Activated T-helper 1 cell treated with anti-CD3 and anti-CD28 coated beads, Interleukin-12 subunit alpha, Interleukin-12 subunit beta, Interleukin-2, Interleukin-4 antibody, amounts not matched to agents 30 ng/mL and 10 ng/mL and 1 ng/mL, durations not matched to agents 14 hours and 24 hours and 36 hours (primary cell): ENCODE measurements at regions of chr21 and their contacts with region 1.

Region 1: DNA sequence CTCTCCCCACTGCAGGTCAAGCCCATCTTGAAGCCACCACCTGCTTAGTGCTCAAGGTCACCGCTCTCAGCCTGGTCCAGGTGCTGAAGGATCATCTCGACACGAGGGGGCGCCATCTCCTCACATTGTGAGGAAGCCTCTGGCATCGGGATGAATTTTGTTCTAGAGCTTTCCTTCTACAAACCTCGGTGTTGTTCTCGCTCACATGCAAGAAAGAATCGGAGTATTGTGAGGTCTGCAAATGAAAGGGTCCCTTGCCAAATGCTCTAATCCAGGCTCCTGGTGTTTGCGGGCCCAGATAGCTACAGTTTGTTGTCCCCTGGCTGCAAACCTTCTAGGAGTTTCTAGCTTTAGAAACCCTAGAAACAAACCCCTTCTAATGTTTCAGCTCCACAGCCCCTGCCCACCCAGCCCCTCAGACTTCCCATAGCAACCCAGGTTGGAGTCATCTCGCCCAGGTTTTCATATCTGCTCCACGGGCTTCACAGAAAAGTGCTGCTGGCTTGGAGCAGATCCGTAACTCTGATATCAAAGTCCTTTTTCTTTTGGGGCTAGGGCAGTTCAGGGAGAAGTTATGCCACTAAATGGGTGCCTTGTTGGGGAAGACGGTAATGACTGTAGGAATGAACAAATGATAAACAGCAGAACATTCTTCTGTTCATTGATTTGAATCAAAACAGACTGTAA is 8.6 kb upstream of the ATP5PO start:
- DNase-seq: peak; percentile 79
- H3K4me3 Mint-ChIP-seq: no peak overlapping the region
- H3K27ac Mint-ChIP-seq: no peak overlapping the region
- H3K4me1 Mint-ChIP-seq: peaks cover 27% of the 10 kb centered on the region
- H3K27me3 Mint-ChIP-seq: peaks cover 3% of the 10 kb centered on the region

Region 2: DNA sequence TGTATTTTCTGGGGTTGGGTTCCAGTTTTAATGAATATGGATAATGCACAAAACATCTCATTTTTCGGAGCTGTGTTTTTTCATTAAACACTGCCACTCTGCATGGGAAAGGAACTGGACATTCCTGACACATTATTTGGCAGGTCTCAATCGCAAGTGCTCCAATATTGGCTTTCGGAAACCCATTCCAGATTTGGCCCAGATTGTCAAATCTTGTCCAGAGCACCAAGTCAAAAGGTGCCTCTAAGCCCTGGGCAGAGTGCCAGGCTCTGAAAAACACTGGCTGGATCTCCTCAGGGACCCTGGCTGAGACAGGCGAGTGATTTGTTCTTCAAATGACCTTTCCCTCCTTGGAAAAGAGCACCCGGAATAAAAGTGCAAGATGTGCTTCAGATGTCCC is 80.8 kb after region 1 on chr21:
- intact Hi-C with region 1: no loop called
- DNase-seq: no peak
- H3K4me3 Mint-ChIP-seq: no peak overlapping the region
- H3K27ac Mint-ChIP-seq: no peak overlapping the region
- H3K4me1 Mint-ChIP-seq: peaks cover 28% of the 10 kb centered on the region
- H3K27me3 Mint-ChIP-seq: no peaks in the 10 kb centered on the region

Region 3: DNA sequence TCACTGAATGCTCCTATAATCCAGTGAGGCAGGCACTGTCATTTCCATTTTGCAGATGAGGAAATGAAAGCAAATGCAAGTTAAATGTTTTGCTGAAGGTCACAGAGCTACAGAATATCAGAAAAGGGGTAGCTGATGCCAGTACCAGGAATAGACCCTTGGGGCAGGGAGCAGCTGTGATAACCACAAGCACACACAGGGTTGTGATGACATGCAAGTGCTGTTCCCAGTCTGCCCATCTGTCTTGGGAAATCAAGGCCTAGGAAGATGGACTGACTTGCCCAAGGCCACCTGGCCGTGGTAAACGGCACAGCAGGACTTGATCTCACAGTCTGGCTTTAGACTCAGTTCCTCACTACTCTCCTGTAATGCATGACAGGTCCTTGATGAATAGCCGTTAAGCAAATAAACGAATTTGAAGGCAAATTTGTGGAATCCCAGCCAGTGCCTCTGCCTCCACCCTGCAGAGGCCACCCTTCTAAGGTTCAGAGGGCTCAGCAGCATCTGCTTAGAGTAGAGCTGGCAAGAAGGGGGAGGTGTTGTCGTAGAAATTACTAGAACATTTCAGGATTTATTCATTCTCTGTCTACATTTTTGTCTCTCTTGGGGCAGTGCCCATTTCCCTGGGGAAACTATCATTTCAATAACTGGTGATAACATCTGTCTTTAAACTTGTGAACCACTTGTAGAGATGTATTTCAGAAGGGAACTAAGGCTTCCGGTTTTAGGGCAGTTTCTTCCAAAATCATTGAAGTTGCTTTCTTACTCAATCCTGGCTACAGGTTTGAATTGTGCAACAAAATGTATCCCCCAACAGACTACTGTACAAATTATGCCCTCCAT is 96.0 kb after region 1 on chr21:
- intact Hi-C with region 1: loop called (anchors 2 kb)
- DNase-seq: no peak
- H3K4me3 Mint-ChIP-seq: peak overlapping the region; percentile 38
- H3K27ac Mint-ChIP-seq: peak overlapping the region; percentile 59
- H3K4me1 Mint-ChIP-seq: peaks cover 26% of the 10 kb centered on the region
- H3K27me3 Mint-ChIP-seq: no peaks in the 10 kb centered on the region

Region 4: DNA sequence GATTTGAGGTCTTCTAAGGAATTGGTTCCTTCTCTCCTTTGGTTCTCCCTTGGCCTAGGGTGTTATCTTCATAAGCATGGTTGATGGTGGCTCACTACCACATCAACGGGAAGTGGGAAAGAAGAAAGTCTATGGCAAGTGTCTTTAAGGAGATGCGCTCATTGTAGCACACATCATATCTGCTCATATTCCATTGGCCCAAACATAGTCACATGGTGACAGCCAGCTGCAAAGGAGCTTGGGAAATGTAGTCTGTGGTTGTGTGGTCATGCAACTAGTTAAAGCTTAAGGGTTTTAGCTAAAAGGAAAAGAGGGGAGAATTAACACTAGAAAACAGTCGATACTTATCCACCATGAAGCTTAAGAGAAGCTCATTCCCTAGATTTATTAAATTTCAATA is 137.8 kb after region 1 on chr21:
- intact Hi-C with region 1: no loop called
- DNase-seq: no peak
- H3K4me3 Mint-ChIP-seq: no peak overlapping the region
- H3K27ac Mint-ChIP-seq: no peak overlapping the region
- H3K4me1 Mint-ChIP-seq: no peaks in the 10 kb centered on the region
- H3K27me3 Mint-ChIP-seq: peaks cover 5% of the 10 kb centered on the region

Region 5: DNA sequence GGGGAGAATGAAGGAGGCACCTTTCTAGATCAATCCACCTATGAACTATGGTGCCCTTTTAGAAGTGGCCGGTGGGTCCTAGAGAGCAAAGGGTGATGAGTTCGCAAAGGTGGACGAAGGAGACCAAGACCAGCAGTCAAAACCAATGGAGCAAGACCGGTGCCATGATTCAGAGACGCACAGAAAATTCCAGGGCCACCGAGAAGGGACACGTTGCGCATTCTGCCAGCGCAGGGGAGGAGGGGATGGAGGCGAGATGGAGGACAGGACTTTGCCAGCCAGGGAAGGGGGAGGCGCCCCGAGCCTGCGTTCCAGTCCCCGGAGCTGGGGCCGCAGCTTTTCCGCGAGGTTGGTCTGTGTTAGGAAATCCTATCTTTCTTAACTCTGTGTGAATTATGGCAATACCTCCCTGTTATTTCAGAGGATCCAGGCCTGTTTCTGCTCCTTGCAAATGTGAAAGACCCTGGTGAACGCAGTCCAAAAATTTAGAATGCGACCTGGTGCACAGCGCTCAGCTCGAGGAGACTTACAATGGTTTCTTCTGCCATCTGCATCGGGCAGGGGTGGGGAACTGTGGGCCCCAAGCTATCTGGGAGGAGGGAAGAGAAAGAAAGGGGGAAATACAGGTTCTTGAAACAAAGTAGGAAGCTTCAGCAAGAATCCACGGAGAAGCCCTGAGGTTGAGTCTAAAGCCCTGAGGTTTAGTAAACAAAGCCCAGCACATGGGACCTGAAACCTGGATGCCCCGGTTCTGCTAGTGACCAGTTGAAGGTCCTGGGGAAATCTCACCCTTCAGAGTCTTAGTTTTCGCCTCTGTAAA is 278.5 kb after region 1 on chr21:
- intact Hi-C with region 1: loop called (anchors 2 kb)
- DNase-seq: no peak
- H3K4me3 Mint-ChIP-seq: no peak overlapping the region
- H3K27ac Mint-ChIP-seq: peak overlapping the region; percentile 48
- H3K4me1 Mint-ChIP-seq: peaks cover 71% of the 10 kb centered on the region
- H3K27me3 Mint-ChIP-seq: no peaks in the 10 kb centered on the region

Region 6: GRCh38 chr21:34243562-34243961 is 319.3 kb after region 1 on chr21:
- intact Hi-C with region 1: loop called (anchors 2 kb)
- DNase-seq: no peak
- H3K4me3 Mint-ChIP-seq: no peak overlapping the region
- H3K27ac Mint-ChIP-seq: no peak overlapping the region
- H3K4me1 Mint-ChIP-seq: no peaks in the 10 kb centered on the region
- H3K27me3 Mint-ChIP-seq: peaks cover 3% of the 10 kb centered on the region